ENCODE measurements at regions of chr21 and their contacts with region 1.

Region 1: DNA sequence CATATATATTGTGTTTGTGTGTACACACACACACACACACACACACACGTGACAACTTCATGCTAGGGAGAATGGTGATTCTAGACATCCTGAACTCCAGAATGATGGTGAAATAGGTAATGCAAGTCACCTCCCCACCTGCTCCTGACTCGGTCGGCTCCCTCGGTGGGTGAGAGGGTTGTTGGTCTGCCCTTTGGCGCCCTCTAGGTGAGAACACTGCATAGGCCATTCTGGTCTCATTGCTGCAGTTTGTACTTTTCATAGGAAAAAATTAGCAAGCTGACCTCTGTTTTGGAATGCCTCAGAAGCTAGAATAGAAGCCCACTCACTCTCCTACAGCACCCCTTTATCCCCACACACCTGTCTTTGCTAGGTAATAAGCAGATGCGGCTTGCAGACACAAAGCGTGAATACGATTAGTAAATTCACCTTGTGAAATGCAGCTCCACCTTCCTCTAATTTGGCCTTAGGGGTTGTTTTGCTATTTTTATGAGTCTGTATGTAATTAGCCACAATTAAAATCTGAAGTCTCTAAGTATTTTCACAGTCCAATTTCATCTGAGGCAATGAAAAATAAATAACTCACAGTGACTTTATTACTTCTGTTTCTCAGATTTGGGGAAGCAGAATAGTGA is 130.0 kb upstream of the KCNJ15 start:
- H3K4me3 ChIP-seq: no peak overlapping the region
- H3K27ac ChIP-seq: no peak overlapping the region
- H3K4me1 ChIP-seq: no peaks in the 10 kb centered on the region
- CTCF ChIP-seq: peak; percentile 68

Region 2: GRCh38 chr21:37711836-37712568 is 414.8 kb before region 1 on chr21:
- CTCF ChIA-PET with region 1: interaction called, 38 read pairs
- POLR2A ChIA-PET with region 1: no interaction called
- H3K4me3 ChIP-seq: no peak overlapping the region
- H3K27ac ChIP-seq: peak overlapping the region; percentile 33; the same call in 1 of the 2 replicates
- H3K4me1 ChIP-seq: peaks cover 19% of the 10 kb centered on the region
- CTCF ChIP-seq: peak; percentile 73

Region 3: DNA sequence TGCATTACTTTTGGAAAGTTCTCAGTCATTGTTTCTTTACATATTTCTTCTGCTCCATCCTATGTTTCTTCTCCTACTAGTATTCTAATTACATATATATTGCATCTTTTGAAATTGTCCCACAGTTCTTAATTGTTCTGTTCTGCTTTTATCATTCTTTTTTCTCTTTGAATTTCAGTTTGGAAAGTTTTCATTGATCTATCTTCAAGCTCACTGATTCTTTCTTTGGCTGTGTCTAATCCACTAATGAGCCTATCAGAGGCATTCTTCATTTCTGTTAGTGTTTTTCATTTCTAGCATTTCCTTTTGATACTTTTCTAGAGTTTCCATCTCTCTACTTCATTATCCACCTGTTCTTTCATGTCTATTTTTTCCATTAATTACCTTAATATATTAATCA is 29.0 kb before region 1 on chr21:
- CTCF ChIA-PET with region 1: interaction called, 12 read pairs
- POLR2A ChIA-PET with region 1: no interaction called
- H3K4me3 ChIP-seq: no peak overlapping the region
- H3K27ac ChIP-seq: no peak overlapping the region
- H3K4me1 ChIP-seq: no peaks in the 10 kb centered on the region
- CTCF ChIP-seq: no peak

Region 4: GRCh38 chr21:38140210-38140907 is 13.6 kb after region 1 on chr21:
- CTCF ChIA-PET with region 1: interaction called, 15 read pairs
- POLR2A ChIA-PET with region 1: no interaction called
- H3K4me3 ChIP-seq: no peak overlapping the region
- H3K27ac ChIP-seq: peak overlapping the region; percentile 51
- H3K4me1 ChIP-seq: peaks cover 14% of the 10 kb centered on the region
- CTCF ChIP-seq: no peak

Region 5: GRCh38 chr21:38170280-38170679 is 43.5 kb after region 1 on chr21:
- CTCF ChIA-PET with region 1: interaction called, 15 read pairs
- POLR2A ChIA-PET with region 1: no interaction called
- H3K4me3 ChIP-seq: no peak overlapping the region
- H3K27ac ChIP-seq: no peak overlapping the region
- H3K4me1 ChIP-seq: no peaks in the 10 kb centered on the region
- CTCF ChIP-seq: no peak

Measured in HEK293 (cell line).